Left lung (tissue), 14 donors: ENCODE measurements at regions of chr12 and their contacts with region 1.

Region 1: GRCh38 chr12:121443193-121443870 is 43.4 kb downstream of the RNF34 start:
- DNase-seq: peak; percentile 41 to 96 (median 77)
- ATAC-seq: peak; percentile 97
- H3K4me3 ChIP-seq: no peak overlapping the region
- H3K27ac ChIP-seq: no peak overlapping the region
- H3K4me1 ChIP-seq: peaks cover 0 to 9% of the 10 kb centered on the region in 2 donors
- H3K27me3 ChIP-seq: no peaks in the 10 kb centered on the region
- CTCF ChIP-seq: peak; percentile 85 to 96

Region 2: DNA sequence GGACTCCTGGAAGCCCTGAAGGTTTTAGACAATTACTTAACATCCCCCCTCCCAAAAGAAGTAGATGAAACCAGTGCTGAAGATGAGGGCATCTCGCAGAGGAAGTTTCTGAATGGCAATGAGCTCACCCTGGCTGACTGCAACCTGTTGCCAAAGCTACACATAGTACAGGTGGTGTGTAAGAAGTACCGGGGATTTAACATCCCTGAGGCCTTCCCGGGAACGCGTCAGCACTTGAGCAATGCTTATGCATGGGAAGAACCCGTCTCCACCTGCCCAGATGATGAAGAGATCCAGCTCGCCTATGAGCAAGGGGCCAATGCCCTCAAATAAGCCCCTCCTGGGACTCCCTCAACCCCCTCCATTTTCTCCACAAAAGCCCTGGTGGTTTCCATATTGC is 528.5 kb before region 1 on chr12:
- intact Hi-C with region 1: no loop called
- DNase-seq: no peak
- ATAC-seq: no peak
- H3K4me3 ChIP-seq: no peak overlapping the region
- H3K27ac ChIP-seq: no peak overlapping the region
- H3K4me1 ChIP-seq: no peaks in the 10 kb centered on the region
- H3K27me3 ChIP-seq: no peaks in the 10 kb centered on the region
- CTCF ChIP-seq: no peak

Region 3: DNA sequence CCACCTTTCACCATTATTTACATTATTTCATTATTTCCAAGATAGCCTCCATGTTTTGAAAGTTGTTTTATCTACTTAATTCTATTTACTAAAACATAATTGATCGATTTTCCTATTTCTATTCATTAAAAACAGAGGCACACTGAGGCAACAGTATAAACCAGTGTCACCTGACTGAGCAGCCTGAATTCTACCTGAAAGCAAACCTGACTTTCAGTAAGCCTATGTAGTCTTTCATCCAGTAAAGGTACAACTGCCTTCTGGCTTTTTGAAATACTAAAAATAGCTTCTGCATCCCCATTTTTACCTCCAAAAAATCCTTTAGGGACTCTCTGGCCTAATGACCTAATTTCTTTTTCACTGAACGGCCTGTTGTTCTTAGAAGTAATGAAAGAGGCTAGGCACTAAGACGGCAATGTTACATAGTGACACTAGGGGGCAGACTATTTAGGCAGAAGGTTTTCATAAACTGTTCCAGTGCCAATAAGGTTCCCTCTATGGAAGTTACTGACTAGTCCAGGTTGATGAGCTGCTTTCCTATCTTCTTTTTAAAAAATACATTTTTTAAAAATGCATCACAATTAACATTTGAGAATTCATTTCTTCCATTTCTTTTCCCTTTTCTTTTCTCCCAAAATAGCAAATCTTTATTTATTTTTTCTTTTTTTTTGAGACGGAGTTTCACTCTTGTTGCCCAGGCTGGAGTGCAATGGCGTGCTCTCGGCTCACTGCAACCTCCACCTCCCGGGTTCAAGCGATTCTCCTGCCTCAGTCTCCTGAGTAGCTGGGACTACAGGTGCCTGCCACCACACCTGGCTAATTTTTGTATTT is 108.6 kb before region 1 on chr12:
- intact Hi-C with region 1: loop called in 1 of 2 experiments (anchors 10 kb)
- DNase-seq: peak in 2 of 4 donors; percentile 40 to 57
- ATAC-seq: peak; percentile 98
- H3K4me3 ChIP-seq: no peak overlapping the region
- H3K27ac ChIP-seq: no peak overlapping the region
- H3K4me1 ChIP-seq: no peaks in the 10 kb centered on the region
- H3K27me3 ChIP-seq: no peaks in the 10 kb centered on the region
- CTCF ChIP-seq: peak; percentile 75 to 89

Region 4: DNA sequence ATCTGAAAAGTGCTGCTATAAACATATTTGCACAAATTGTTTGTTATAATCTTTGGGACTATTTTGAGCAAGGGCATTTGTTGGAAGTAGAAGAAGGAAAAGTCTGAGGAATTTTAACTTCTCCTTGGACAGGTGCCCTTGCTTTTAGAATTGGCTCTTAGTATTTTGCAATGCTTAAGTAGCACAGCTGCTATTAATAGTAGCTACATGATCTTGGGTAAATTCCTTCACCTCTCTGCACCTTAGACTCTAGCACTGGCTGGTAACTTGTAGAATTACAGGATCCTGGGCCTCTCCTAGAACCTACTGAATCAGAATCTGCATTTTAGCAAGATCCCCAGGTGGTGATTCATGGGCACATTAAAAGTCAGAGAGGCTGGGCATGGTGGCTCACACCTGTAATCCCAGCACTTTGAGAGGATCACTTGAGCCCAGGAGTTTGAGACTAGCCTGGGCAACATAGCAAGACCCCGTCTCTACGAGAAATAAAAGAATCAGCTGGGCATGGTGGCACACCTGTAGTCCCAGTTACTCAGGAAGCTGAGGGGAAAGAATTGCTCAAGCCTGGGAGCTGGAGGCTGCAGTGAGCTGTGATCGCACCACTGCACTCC is 258.4 kb after region 1 on chr12:
- intact Hi-C with region 1: no loop called
- DNase-seq: peak in 1 of 4 donors; percentile 63
- ATAC-seq: peak; percentile 94
- H3K4me3 ChIP-seq: no peak overlapping the region
- H3K27ac ChIP-seq: peak overlapping the region; percentile 49 to 77
- H3K4me1 ChIP-seq: no peaks in the 10 kb centered on the region
- H3K27me3 ChIP-seq: no peaks in the 10 kb centered on the region
- CTCF ChIP-seq: no peak